HepG2 (cell line): ENCODE measurements at regions of chr11 and their contacts with region 1.

Region 1: DNA sequence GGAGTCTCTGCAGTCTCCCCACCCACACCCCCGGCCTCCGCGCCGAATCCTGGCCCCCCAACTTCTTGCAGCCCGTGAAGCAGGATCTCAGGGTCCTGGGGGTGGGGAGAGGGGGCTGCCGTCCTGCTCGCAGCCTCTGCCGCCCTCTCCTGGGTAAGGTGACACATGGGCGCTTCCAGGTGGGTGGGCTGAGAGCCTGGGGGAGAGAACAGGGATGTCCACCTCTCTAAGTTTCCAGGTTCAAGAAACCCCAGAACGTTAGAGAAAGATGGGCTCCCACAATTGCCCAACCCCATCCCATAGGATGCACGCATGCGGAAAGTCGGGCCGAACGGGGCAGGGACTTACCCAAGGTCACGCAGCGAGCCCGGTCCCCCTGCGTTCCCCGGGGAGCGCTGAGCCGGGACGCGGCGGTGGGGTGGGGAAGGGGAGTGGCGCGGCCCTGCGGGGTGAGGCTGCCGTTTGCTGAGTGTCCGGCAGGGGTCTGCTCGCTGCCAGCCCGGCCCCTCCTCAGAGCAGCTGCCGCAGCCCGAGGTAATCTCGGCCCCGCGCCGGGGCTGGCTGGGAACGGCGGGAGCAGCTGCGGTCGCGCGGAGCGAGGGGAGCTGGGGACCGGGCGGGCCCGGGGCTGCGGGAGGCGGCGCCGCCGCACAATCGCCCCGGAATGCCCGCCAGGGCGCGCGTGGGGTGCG is 705 bp upstream of the CAPN1 start:
- DNase-seq: peak; percentile 61
- ATAC-seq: peak; percentile 90
- H3K4me3 ChIP-seq: peak overlapping the region; percentile 82 to 94 (median 91)
- H3K27ac ChIP-seq: peak overlapping the region; percentile 77
- H3K4me1 ChIP-seq: peaks cover 25% of the 10 kb centered on the region
- H3K27me3 ChIP-seq: no peaks in the 10 kb centered on the region; a peak in 1 of 5 replicates
- CTCF ChIP-seq: peak; percentile 92
- EP300 ChIP-seq: no peak
- POLR2A ChIP-seq: peak in 1 of 2 experiments; percentile 47; a peak in 1 of 4 replicates
- RAD21 ChIP-seq: peak; percentile 69

Region 2: DNA sequence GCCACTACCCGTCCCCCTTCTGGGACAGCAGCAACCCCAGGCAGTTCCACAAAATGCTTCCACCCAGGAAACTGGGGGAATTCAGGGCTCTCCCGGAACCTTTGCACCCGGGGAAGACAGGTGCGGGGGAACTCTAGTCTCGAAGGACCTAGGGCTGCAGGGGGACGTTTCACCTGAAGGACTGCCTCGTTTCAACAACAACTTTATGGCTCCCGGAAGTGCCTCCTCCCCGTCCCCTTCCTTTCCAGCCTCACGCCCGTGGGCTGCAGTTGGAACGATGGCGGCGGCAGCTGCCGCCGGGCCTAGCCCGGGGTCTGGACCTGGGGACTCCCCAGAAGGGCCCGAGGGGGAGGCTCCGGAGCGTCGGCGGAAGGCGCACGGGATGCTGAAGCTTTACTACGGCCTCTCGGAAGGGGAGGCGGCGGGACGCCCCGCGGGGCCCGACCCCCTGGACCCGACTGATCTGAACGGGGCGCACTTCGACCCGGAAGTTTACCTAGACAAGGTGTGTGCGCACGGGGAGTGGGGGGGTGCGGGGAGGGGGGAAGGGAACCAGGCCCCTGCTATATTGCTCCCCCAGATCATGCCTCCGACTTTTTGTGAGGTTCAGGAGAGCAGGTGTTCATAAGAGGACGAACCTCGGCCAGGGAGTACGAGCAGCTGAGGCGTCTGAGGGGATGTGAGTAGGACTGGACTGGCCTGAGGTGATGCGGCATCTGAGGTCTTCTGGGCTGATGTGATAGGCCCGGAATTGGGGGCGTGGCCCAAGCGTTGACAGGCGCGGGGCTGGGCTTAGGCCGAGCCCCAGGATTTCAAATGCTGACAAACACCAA is 84.8 kb before region 1 on chr11 and contains the start of gene VPS51:
- CTCF ChIA-PET with region 1: no interaction called
- POLR2A ChIA-PET with region 1: interaction called, 11 read pairs
- in situ Hi-C with region 1: no loop called
- intact Hi-C with region 1: no loop called
- DNase-seq: peak; percentile 87
- ATAC-seq: peak; percentile 98
- H3K4me3 ChIP-seq: peak within 1 kb of the TSS; percentile 78 to 85 (median 83)
- H3K27ac ChIP-seq: peak within 1 kb of the TSS; percentile 93
- H3K4me1 ChIP-seq: peaks cover 50% of the 10 kb centered on the region
- H3K27me3 ChIP-seq: no peaks in the 10 kb centered on the region; a peak in 1 of 5 replicates
- CTCF ChIP-seq: peak; percentile 28; the same call in 1 of the 2 replicates
- EP300 ChIP-seq: peak; percentile 61 to 68; a peak in 2 of 4 replicates
- POLR2A ChIP-seq: peak; percentile 83 to 88
- RAD21 ChIP-seq: peak; percentile 48; the same call in 1 of the 2 replicates
- total RNA-seq, gene VPS51: 57.4 and 76.3 TPM in 2 replicates

Region 3: DNA sequence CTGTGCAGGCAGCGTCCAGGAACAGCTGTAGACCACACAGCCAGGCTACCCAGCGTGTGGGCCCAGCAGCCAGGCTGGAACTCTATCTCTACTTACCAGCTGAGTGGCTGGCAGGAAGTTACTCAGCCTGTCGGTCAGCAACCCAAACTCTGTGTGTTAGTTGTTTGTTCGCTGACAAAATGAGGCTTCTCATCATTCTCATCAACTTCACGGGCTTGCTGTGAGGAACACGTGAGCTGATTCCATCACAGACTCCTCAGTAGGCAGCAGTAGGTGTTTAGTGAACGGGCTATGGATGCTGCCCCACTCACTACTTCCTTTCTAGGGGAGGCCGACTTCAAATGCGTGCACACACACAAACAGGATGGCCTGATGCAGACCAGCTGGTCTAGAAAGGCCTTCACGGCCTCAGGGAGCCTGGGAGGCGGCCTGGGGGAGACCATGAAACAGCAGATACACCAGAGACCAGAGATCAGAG is 11.8 kb before region 1 on chr11:
- CTCF ChIA-PET with region 1: no interaction called
- POLR2A ChIA-PET with region 1: interaction called, 74 read pairs
- in situ Hi-C with region 1: no loop called
- intact Hi-C with region 1: loop called (anchors 1 kb)
- DNase-seq: no peak
- ATAC-seq: peak; percentile 11; the same call in 2 of the 3 replicates
- H3K4me3 ChIP-seq: peak overlapping the region in 2 of 3 experiments; percentile 15 to 30; a peak in 2 of 6 replicates
- H3K27ac ChIP-seq: peak overlapping the region; percentile 55
- H3K4me1 ChIP-seq: peaks cover 82% of the 10 kb centered on the region
- H3K27me3 ChIP-seq: no peaks in the 10 kb centered on the region
- CTCF ChIP-seq: no peak
- EP300 ChIP-seq: no peak
- POLR2A ChIP-seq: no peak
- RAD21 ChIP-seq: no peak

Region 4: DNA sequence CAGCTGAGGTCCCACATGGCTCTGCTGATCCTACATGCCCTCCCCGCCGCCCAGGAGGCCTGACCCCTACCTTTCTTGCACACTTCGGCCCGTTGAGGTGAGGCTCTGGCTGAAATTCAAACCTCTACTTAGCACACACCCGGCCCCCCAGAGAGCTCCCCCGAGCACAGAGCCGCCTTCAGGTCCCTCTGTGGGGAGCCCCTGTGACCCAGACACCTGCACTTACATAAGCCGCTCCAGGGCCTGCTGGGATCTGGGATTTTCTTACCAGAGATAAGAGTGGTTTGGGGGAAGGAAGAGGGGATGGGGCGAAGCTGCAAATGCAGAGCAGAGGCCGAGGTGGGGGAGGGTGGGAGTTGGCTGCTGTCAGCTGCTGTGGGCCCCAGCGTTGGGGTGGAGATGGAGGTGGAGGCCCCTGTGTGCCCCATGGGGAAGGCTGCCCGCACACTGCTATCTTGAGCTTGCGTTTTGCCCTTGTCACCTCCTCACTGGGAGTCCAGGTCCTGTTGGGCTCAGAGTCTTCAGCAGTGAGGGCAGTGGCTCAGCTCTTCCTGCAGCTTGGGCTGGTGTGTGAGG is 31.3 kb after region 1 on chr11:
- CTCF ChIA-PET with region 1: no interaction called
- POLR2A ChIA-PET with region 1: no interaction called
- in situ Hi-C with region 1: no loop called
- intact Hi-C with region 1: no loop called
- DNase-seq: no peak
- ATAC-seq: no peak
- H3K4me3 ChIP-seq: no peak overlapping the region
- H3K27ac ChIP-seq: no peak overlapping the region
- H3K4me1 ChIP-seq: no peaks in the 10 kb centered on the region
- H3K27me3 ChIP-seq: no peaks in the 10 kb centered on the region
- CTCF ChIP-seq: no peak
- EP300 ChIP-seq: no peak
- POLR2A ChIP-seq: 0 out of 4 replicates have a peak, but pooled peaks of 1 of the 2 experiments have one; percentile 21
- RAD21 ChIP-seq: no peak

Region 5: GRCh38 chr11:65243773-65244172 is 62.8 kb after region 1 on chr11:
- CTCF ChIA-PET with region 1: no interaction called
- POLR2A ChIA-PET with region 1: no interaction called
- in situ Hi-C with region 1: no loop called
- intact Hi-C with region 1: no loop called
- DNase-seq: no peak
- ATAC-seq: no peak
- H3K4me3 ChIP-seq: no peak overlapping the region
- H3K27ac ChIP-seq: no peak overlapping the region
- H3K4me1 ChIP-seq: peaks cover 6% of the 10 kb centered on the region; the same call in 1 of the 2 replicates
- H3K27me3 ChIP-seq: no peaks in the 10 kb centered on the region; a peak in 1 of 5 replicates
- CTCF ChIP-seq: no peak
- EP300 ChIP-seq: no peak
- POLR2A ChIP-seq: no peak
- RAD21 ChIP-seq: no peak